GM12878 (cell line): ENCODE measurements at regions of chr5 and their contacts with region 1.

Region 1: GRCh38 chr5:96868603-96869371 is 7.5 kb upstream of the ERAP2 start:
- DNase-seq: no peak
- ATAC-seq: peak; percentile 86
- H3K4me3 ChIP-seq: no peak overlapping the region
- H3K27ac ChIP-seq: no peak overlapping the region
- H3K4me1 ChIP-seq: peaks cover 28% of the 10 kb centered on the region
- H3K27me3 ChIP-seq: no peaks in the 10 kb centered on the region
- CTCF ChIP-seq: peak; percentile 99 to 100 (median 100); a peak in 5 of 6 replicates
- EP300 ChIP-seq: no peak
- POLR2A ChIP-seq: no peak
- RAD21 ChIP-seq: peak; percentile 100

Region 2: GRCh38 chr5:95697781-95698681 is 1170.8 kb before region 1 on chr5:
- CTCF ChIA-PET with region 1: no interaction called
- POLR2A ChIA-PET with region 1: no interaction called
- RAD21 ChIA-PET with region 1: no interaction called
- SMC1A ChIA-PET with region 1: no interaction called
- in situ Hi-C with region 1: no loop called
- intact Hi-C with region 1: no loop called
- DNase-seq: no peak
- ATAC-seq: no peak
- H3K4me3 ChIP-seq: no peak overlapping the region
- H3K27ac ChIP-seq: no peak overlapping the region
- H3K4me1 ChIP-seq: no peaks in the 10 kb centered on the region
- H3K27me3 ChIP-seq: no peaks in the 10 kb centered on the region
- CTCF ChIP-seq: no peak
- EP300 ChIP-seq: no peak
- POLR2A ChIP-seq: no peak
- RAD21 ChIP-seq: no peak

Region 3: GRCh38 chr5:96463106-96463505 is 405.7 kb before region 1 on chr5:
- CTCF ChIA-PET with region 1: no interaction called
- POLR2A ChIA-PET with region 1: no interaction called
- RAD21 ChIA-PET with region 1: no interaction called
- SMC1A ChIA-PET with region 1: no interaction called
- in situ Hi-C with region 1: no loop called
- intact Hi-C with region 1: no loop called
- DNase-seq: no peak
- ATAC-seq: no peak
- H3K4me3 ChIP-seq: no peak overlapping the region
- H3K27ac ChIP-seq: no peak overlapping the region
- H3K4me1 ChIP-seq: no peaks in the 10 kb centered on the region
- H3K27me3 ChIP-seq: no peaks in the 10 kb centered on the region
- CTCF ChIP-seq: no peak
- EP300 ChIP-seq: no peak
- POLR2A ChIP-seq: no peak
- RAD21 ChIP-seq: no peak

Region 4: DNA sequence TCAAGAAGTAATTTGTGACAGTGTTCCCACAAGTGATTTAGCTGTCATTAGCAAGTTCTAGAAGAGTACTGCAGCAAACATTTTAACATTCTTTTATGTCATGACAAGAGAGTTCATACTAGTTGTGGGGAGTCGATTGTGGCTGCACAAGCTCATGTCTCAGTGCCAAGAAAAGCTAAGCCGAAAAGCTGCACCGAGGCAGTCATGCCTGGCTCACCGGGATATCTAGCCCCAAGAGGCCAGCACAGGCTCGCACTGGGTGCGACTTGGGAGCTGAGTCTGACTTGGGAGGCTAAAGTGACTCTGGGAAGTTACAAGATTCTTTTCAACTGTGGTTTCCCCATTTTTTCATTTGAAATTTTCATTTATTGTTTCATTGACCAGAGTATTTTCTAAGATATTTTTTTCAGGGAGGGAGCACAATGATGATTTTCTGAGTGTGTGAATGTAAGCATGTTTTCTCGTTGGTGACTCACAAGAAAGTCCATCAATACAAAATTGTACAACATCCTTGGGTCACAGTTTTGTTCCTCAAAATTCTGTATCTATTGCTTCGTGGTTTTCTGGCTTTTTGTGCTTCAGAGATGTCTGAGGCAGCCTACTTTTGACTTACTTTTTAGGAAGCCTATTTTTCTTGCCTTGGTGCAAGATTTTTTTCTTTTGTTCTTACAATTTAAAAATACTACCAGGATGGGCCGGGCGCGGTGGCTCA is 187.9 kb before region 1 on chr5:
- CTCF ChIA-PET with region 1: no interaction called
- POLR2A ChIA-PET with region 1: no interaction called
- RAD21 ChIA-PET with region 1: no interaction called
- SMC1A ChIA-PET with region 1: no interaction called
- in situ Hi-C with region 1: no loop called
- intact Hi-C with region 1: no loop called
- DNase-seq: no peak
- ATAC-seq: no peak
- H3K4me3 ChIP-seq: no peak overlapping the region
- H3K27ac ChIP-seq: no peak overlapping the region
- H3K4me1 ChIP-seq: peaks cover 7% of the 10 kb centered on the region
- H3K27me3 ChIP-seq: no peaks in the 10 kb centered on the region
- CTCF ChIP-seq: no peak
- EP300 ChIP-seq: no peak
- POLR2A ChIP-seq: no peak
- RAD21 ChIP-seq: no peak

Region 5: GRCh38 chr5:96752341-96753016 is 116.3 kb before region 1 on chr5:
- CTCF ChIA-PET with region 1: interaction called, 21 read pairs
- POLR2A ChIA-PET with region 1: no interaction called
- RAD21 ChIA-PET with region 1: interaction called, 21 read pairs
- SMC1A ChIA-PET with region 1: interaction called, 16 read pairs
- in situ Hi-C with region 1: no loop called
- intact Hi-C with region 1: loop called (anchors 5 kb)
- DNase-seq: no peak
- ATAC-seq: peak; percentile 63
- H3K4me3 ChIP-seq: no peak overlapping the region
- H3K27ac ChIP-seq: no peak overlapping the region
- H3K4me1 ChIP-seq: no peaks in the 10 kb centered on the region
- H3K27me3 ChIP-seq: no peaks in the 10 kb centered on the region
- CTCF ChIP-seq: peak; percentile 54 to 61 (median 58); a peak in 5 of 6 replicates
- EP300 ChIP-seq: no peak
- POLR2A ChIP-seq: no peak
- RAD21 ChIP-seq: peak; percentile 65

Region 6: DNA sequence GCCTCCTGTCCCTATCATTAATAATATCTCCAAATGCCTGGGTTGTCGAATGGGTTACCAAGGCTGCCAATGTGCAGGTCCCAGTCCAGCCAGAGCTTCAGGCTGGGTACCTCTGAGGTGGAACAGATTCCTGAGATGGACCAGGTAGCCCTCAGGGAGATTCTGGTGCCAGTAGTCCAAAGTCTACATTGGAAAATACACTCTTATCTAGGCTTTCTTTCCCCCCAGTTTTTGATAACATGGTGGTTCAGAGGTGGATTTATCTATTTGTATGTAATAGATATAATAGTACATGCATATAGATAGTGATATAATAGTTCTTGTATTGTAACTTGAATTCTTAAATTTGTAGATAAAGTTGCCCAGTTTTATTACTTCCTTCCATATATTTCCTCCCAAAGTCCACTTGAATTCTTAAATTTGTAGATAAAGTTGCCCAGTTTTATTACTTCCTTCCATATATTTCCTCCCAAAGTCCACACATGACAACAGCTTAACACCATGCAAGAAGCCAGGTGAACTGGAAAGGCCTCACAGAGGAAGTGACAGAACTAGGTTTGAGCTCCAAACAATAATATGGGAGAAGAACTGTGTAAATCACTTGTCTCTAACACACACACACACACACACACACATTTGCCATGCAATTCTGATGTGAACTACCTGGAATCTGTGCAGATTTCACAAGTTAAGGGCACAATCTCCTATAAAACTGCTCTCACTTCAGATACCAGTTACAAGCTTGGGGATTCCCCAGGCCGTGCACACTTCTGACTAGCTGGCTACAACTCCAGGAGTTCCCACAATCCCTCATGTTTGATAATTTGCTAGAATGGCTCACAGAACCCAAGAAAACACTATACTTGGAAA is 30.4 kb before region 1 on chr5:
- CTCF ChIA-PET with region 1: interaction called, 11 read pairs
- POLR2A ChIA-PET with region 1: no interaction called
- RAD21 ChIA-PET with region 1: interaction called, 7 read pairs
- SMC1A ChIA-PET with region 1: interaction called, 6 read pairs
- in situ Hi-C with region 1: no loop called
- intact Hi-C with region 1: no loop called
- DNase-seq: no peak
- ATAC-seq: peak; percentile 37; the same call in 2 of the 3 replicates
- H3K4me3 ChIP-seq: no peak overlapping the region
- H3K27ac ChIP-seq: no peak overlapping the region
- H3K4me1 ChIP-seq: peaks cover 5% of the 10 kb centered on the region; the same call in 1 of the 2 replicates
- H3K27me3 ChIP-seq: no peaks in the 10 kb centered on the region
- CTCF ChIP-seq: no peak
- EP300 ChIP-seq: no peak
- POLR2A ChIP-seq: no peak
- RAD21 ChIP-seq: no peak

Region 7: GRCh38 chr5:96934708-96935558 is 66.1 kb after region 1 on chr5:
- CTCF ChIA-PET with region 1: interaction called, 35 read pairs
- POLR2A ChIA-PET with region 1: interaction called, 12 read pairs
- RAD21 ChIA-PET with region 1: interaction called, 67 read pairs
- SMC1A ChIA-PET with region 1: interaction called, 78 read pairs
- in situ Hi-C with region 1: no loop called
- intact Hi-C with region 1: loop called (anchors 1 kb)
- DNase-seq: peak; percentile 86
- ATAC-seq: peak; percentile 77
- H3K4me3 ChIP-seq: peak overlapping the region; percentile 94
- H3K27ac ChIP-seq: peak overlapping the region; percentile 97
- H3K4me1 ChIP-seq: peaks cover 14% of the 10 kb centered on the region
- H3K27me3 ChIP-seq: no peaks in the 10 kb centered on the region
- CTCF ChIP-seq: no peak
- EP300 ChIP-seq: peak; percentile 26 to 74; a peak in 2 of 4 replicates
- POLR2A ChIP-seq: peak; percentile 85
- RAD21 ChIP-seq: no peak

Region 8: DNA sequence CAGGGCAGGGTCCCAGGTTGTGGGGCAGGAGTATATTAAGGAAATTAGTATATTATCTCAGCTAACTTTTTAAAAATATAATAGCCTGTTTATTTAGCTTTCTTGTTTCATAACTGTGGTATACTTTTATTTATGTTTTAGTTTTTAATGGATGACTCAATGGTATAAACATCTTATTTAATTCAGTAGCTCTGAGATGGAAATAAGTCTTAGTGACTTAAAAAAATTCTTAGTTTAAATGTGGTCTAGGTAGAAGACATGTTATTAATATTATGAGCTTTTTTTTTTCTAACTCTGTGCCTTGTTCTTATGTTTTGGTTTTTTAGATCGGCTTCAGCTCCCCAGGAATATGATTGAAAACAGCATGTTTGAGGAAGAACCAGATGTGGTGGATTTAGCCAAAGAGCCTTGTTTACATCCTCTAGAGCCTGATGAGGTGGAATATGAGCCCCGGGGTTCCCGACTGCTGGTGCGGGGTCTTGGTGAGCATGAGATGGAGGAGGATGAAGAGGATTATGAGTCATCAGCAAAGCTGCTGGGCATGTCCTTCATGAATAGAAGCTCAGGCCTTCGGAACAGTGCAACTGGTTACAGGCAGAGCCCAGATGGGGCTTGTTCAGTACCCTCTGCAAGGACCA is 110.1 kb after region 1 on chr5:
- CTCF ChIA-PET with region 1: interaction called, 23 read pairs
- POLR2A ChIA-PET with region 1: no interaction called
- RAD21 ChIA-PET with region 1: interaction called, 9 read pairs
- SMC1A ChIA-PET with region 1: interaction called, 15 read pairs
- in situ Hi-C with region 1: no loop called
- intact Hi-C with region 1: no loop called
- DNase-seq: no peak
- ATAC-seq: no peak
- H3K4me3 ChIP-seq: no peak overlapping the region
- H3K27ac ChIP-seq: no peak overlapping the region
- H3K4me1 ChIP-seq: no peaks in the 10 kb centered on the region
- H3K27me3 ChIP-seq: no peaks in the 10 kb centered on the region
- CTCF ChIP-seq: no peak
- EP300 ChIP-seq: no peak
- POLR2A ChIP-seq: no peak
- RAD21 ChIP-seq: no peak

Region 9: DNA sequence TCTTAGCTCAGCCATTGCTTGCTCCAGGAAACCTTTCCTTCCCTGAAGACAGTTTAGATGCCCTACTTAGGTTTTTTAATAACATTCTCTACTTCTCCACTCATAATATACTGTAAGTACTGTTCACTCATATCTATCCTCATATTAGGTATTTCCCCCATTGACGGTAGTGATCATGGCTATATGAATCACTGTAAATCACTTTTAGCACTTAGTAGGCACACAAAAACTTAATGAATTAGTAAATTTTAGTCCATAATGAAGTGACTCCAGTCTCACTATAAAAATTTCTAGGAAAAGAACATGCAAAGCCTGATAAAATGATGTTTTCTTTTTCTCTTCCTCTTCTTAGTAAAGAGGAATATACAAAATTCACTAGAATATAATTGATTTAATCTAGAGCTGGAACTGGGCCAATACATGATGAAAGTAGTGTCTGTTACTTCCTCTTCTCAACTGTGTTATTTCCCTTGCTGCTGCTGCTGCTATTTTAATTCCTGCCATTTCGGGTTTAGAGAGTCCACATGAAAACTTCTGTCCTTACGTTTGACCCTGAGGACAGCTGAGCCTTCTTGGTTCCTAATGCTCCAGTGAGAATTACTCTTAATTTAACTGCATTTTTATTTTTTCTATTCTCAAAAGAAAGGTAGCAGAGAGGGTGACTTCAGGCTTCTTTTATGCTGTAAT is 140.6 kb after region 1 on chr5:
- CTCF ChIA-PET with region 1: interaction called, 22 read pairs
- POLR2A ChIA-PET with region 1: interaction called, 3 read pairs
- RAD21 ChIA-PET with region 1: interaction called, 9 read pairs
- SMC1A ChIA-PET with region 1: interaction called, 19 read pairs
- in situ Hi-C with region 1: no loop called
- intact Hi-C with region 1: no loop called
- DNase-seq: peak; percentile 19
- ATAC-seq: peak; percentile 86
- H3K4me3 ChIP-seq: no peak overlapping the region
- H3K27ac ChIP-seq: peak overlapping the region; percentile 8; the same call in 1 of the 2 replicates
- H3K4me1 ChIP-seq: peaks cover 11% of the 10 kb centered on the region; the same call in 1 of the 2 replicates
- H3K27me3 ChIP-seq: no peaks in the 10 kb centered on the region
- CTCF ChIP-seq: no peak
- EP300 ChIP-seq: no peak
- POLR2A ChIP-seq: no peak
- RAD21 ChIP-seq: no peak

Region 10: DNA sequence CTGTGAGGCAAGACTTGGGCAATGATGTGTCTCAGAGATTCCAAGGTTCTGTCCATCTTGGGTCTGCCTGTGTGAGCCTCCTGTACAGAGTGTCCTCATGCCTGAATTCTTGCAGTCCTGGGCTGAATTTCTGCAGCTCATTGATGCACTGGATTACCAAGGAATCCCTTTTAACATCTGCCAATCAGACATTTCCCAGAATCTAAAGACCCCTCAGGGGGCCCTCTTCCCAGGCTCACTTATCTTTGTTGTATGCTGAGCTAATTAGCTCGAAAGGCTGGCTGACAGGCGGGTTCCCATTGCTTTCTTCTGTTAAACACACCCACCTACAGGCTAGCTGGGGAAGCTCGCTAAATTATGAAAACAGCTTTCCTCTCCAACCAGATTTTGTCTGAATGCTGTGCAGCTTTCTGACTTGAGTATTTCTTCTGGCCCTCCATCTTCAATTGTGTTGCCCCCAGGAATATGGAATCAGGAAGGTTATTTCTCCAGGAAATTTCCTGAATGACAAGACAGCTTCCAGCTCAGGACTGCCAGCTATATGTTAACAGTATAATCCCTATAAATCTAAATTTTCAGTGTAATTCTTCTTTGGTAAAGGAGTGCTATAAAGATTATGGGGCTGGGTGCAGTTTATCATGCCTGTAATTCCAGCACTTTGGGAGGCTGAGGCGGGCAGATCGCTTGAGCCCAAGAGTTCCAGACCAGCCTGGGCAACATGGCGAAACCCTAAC is 273.9 kb after region 1 on chr5 and contains the start of gene LIX1:
- CTCF ChIA-PET with region 1: interaction called, 165 read pairs
- POLR2A ChIA-PET with region 1: no interaction called
- RAD21 ChIA-PET with region 1: interaction called, 86 read pairs
- SMC1A ChIA-PET with region 1: interaction called, 106 read pairs
- in situ Hi-C with region 1: no loop called
- intact Hi-C with region 1: loop called (anchors 2 kb)
- DNase-seq: no peak
- ATAC-seq: peak; percentile 97
- H3K4me3 ChIP-seq: no peak within 1 kb of the TSS
- H3K27ac ChIP-seq: no peak within 1 kb of the TSS
- H3K4me1 ChIP-seq: no peaks in the 10 kb centered on the region
- H3K27me3 ChIP-seq: no peaks in the 10 kb centered on the region
- CTCF ChIP-seq: peak; percentile 60 to 84 (median 70); a peak in 5 of 6 replicates
- EP300 ChIP-seq: no peak
- POLR2A ChIP-seq: no peak
- RAD21 ChIP-seq: peak; percentile 91
- polyA plus RNA-seq, gene LIX1: 0.02 TPM